CD8-positive, alpha-beta T cell (primary cell): ENCODE measurements at regions of chr10 and their contacts with region 1.

Region 1: GRCh38 chr10:79195091-79195923 is 126.5 kb downstream of the ZMIZ1 start:
- DNase-seq: peak; percentile 56 to 87 (median 76)
- ATAC-seq: peak; percentile 91
- H3K4me3 ChIP-seq: no peak overlapping the region
- H3K4me3 Mint-ChIP-seq: no peak overlapping the region
- H3K27ac ChIP-seq: no peak overlapping the region
- H3K27ac Mint-ChIP-seq: no peak overlapping the region
- H3K4me1 ChIP-seq: peaks cover 4% of the 10 kb centered on the region
- H3K4me1 Mint-ChIP-seq: no peaks in the 10 kb centered on the region
- H3K27me3 ChIP-seq: no peaks in the 10 kb centered on the region
- H3K27me3 Mint-ChIP-seq: no peaks in the 10 kb centered on the region
- CTCF ChIP-seq: peak; percentile 93

Region 2: DNA sequence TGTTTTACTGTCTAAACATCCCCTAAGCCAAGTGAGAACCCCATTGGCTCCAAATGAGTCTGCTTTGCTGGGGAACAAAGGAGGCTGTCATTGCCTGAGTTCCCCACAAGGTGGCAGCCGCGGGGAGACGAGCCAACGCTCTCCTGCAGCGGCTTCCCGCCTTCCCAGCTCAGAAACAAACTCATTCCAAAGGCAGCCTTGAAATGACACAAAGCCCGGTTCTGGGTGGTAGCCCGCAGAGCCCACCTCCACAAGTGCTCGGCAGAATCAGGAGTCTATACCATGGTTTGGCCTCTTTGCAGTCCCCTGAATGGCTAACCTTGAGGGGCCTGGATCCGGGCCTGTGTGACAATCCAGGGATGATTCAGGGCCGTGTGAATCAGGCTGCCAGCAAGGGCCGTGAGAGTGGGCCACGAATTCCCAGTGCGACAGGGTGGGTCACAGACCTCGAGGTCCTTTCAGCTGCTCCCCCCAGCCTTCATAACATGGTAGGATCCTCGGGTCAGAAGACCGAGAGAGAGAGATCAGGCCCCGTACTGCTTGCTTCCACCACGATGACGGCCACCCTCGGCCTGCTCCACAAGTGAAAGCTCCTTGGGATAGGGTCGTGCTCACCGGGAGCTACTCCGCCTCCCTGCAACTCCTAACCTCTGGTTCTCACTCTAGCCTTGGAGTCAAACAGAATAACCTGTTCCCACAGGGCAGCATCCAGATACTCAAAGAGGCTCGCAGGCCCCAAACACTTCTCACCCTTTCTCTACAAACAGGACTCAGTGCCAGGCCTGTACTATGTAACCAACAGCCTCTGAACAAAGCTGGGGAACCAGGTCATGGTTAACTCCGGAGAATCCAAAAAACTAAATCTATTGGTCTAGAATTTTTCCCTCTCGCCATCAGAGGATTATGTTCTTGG is 1348.3 kb before region 1 on chr10:
- CTCF ChIA-PET with region 1: interaction called, 3 read pairs
- POLR2A ChIA-PET with region 1: no interaction called
- intact Hi-C with region 1: loop called (anchors 2 to 5 kb)
- DNase-seq: peak; percentile 21 to 74 (median 62)
- ATAC-seq: peak; percentile 88
- H3K4me3 ChIP-seq: no peak overlapping the region
- H3K4me3 Mint-ChIP-seq: no peak overlapping the region
- H3K27ac ChIP-seq: no peak overlapping the region
- H3K27ac Mint-ChIP-seq: no peak overlapping the region
- H3K4me1 ChIP-seq: no peaks in the 10 kb centered on the region
- H3K4me1 Mint-ChIP-seq: peaks cover 6% of the 10 kb centered on the region
- H3K27me3 ChIP-seq: no peaks in the 10 kb centered on the region
- H3K27me3 Mint-ChIP-seq: no peaks in the 10 kb centered on the region
- CTCF ChIP-seq: peak; percentile 74

Region 3: DNA sequence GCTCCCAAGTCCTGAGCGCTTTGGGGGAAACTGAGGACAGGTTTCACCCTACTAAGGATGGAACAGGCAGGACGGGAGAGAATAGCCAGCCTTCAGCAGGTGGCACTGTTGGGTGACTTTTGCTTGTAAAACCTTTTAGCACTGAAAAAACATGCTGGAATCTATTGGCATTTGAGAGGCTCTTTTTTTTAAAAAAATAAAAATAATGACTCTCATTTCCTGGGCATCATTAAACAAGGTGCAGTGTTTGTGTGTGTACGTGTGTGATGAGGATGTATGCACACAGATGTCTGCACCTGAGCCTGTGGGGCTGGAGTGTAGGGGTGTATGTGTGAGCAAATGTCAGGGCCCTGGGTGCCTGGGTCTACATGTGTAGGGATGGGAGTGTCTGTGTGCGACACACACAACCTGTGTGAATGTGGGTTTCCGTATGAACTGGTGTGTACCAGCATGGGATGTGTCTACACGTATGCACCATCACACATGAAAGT is 983.7 kb before region 1 on chr10:
- CTCF ChIA-PET with region 1: interaction called, 5 read pairs
- POLR2A ChIA-PET with region 1: no interaction called
- intact Hi-C with region 1: loop called in 1 of 2 experiments (anchors 1 kb)
- DNase-seq: peak in 2 of 9 experiments; percentile 9 to 17
- ATAC-seq: no peak
- H3K4me3 ChIP-seq: no peak overlapping the region
- H3K4me3 Mint-ChIP-seq: no peak overlapping the region
- H3K27ac ChIP-seq: no peak overlapping the region
- H3K27ac Mint-ChIP-seq: no peak overlapping the region
- H3K4me1 ChIP-seq: no peaks in the 10 kb centered on the region
- H3K4me1 Mint-ChIP-seq: no peaks in the 10 kb centered on the region
- H3K27me3 ChIP-seq: no peaks in the 10 kb centered on the region
- H3K27me3 Mint-ChIP-seq: peaks cover 8% of the 10 kb centered on the region
- CTCF ChIP-seq: no peak

Region 4: GRCh38 chr10:78599081-78599853 is 596.0 kb before region 1 on chr10:
- CTCF ChIA-PET with region 1: interaction called, 9 read pairs
- POLR2A ChIA-PET with region 1: no interaction called
- intact Hi-C with region 1: loop called in 1 of 2 experiments (anchors 1 kb)
- DNase-seq: peak in 2 of 9 experiments; percentile 10 to 25
- ATAC-seq: no peak
- H3K4me3 ChIP-seq: no peak overlapping the region
- H3K4me3 Mint-ChIP-seq: no peak overlapping the region
- H3K27ac ChIP-seq: no peak overlapping the region
- H3K27ac Mint-ChIP-seq: no peak overlapping the region
- H3K4me1 ChIP-seq: no peaks in the 10 kb centered on the region
- H3K4me1 Mint-ChIP-seq: no peaks in the 10 kb centered on the region
- H3K27me3 ChIP-seq: no peaks in the 10 kb centered on the region
- H3K27me3 Mint-ChIP-seq: no peaks in the 10 kb centered on the region
- CTCF ChIP-seq: no peak

Region 5: GRCh38 chr10:78852466-78853240 is 342.7 kb before region 1 on chr10:
- CTCF ChIA-PET with region 1: interaction called, 17 read pairs
- POLR2A ChIA-PET with region 1: no interaction called
- intact Hi-C with region 1: loop called in 1 of 2 experiments (anchors 1 kb)
- DNase-seq: peak in 3 of 9 experiments; percentile 26 to 42 (median 32)
- ATAC-seq: no peak
- H3K4me3 ChIP-seq: no peak overlapping the region
- H3K4me3 Mint-ChIP-seq: no peak overlapping the region
- H3K27ac ChIP-seq: no peak overlapping the region
- H3K27ac Mint-ChIP-seq: no peak overlapping the region
- H3K4me1 ChIP-seq: no peaks in the 10 kb centered on the region
- H3K4me1 Mint-ChIP-seq: no peaks in the 10 kb centered on the region
- H3K27me3 ChIP-seq: no peaks in the 10 kb centered on the region
- H3K27me3 Mint-ChIP-seq: no peaks in the 10 kb centered on the region
- CTCF ChIP-seq: peak; percentile 19

Region 6: DNA sequence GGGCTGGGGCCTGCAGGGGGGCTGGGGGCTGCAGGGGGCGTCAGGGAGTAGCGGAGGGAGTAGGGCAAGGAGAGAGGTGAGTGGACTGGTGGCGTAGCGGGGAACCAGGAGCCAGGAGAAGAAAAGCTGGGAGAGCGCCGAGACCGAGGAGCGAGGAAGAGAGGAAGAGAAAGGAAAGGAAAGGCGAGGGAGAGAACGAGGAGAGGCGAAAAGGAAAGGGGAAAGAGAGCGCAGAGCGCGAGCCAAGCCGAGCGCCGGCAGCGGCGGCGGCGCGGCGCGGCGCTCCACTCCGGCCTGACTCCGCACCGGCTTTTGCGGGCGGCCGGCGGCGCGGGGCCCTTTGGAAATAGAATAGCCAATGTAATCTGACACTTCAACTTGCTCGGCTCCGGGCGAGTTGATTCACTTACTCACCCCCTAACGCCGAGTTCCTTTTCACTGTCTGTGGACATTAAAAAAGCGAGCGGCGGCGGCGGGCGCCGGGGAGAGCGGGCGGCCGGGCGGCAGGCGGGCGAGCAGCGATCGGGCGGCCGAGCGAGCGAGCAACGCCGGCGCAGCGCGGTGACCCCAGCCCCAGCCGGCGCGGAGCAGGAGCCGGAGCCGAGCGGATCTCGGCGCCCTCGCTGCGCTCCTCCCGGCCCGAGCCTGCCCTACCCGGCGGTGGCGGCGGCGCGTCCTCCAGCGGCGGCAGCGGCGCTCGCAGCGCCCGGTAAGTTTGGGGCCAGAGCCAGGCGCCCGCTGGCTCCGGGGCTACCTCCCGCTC is 126.6 kb before region 1 on chr10 and contains the start of gene ZMIZ1:
- CTCF ChIA-PET with region 1: interaction called, 7 read pairs
- POLR2A ChIA-PET with region 1: interaction called, 3 read pairs
- intact Hi-C with region 1: loop called in 1 of 2 experiments (anchors 5 kb)
- DNase-seq: peak; percentile 61 to 87 (median 80)
- ATAC-seq: peak; percentile 60
- H3K4me3 ChIP-seq: peak within 1 kb of the TSS; percentile 83 to 94
- H3K4me3 Mint-ChIP-seq: peak within 1 kb of the TSS; percentile 94
- H3K27ac ChIP-seq: peak within 1 kb of the TSS; percentile 36 to 44
- H3K27ac Mint-ChIP-seq: peak within 1 kb of the TSS; percentile 85
- H3K4me1 ChIP-seq: peaks cover 36% of the 10 kb centered on the region
- H3K4me1 Mint-ChIP-seq: peaks cover 48% of the 10 kb centered on the region
- H3K27me3 ChIP-seq: no peaks in the 10 kb centered on the region
- H3K27me3 Mint-ChIP-seq: no peaks in the 10 kb centered on the region
- CTCF ChIP-seq: no peak
- total RNA-seq, gene ZMIZ1: 10.1 to 10.8 TPM

Region 7: DNA sequence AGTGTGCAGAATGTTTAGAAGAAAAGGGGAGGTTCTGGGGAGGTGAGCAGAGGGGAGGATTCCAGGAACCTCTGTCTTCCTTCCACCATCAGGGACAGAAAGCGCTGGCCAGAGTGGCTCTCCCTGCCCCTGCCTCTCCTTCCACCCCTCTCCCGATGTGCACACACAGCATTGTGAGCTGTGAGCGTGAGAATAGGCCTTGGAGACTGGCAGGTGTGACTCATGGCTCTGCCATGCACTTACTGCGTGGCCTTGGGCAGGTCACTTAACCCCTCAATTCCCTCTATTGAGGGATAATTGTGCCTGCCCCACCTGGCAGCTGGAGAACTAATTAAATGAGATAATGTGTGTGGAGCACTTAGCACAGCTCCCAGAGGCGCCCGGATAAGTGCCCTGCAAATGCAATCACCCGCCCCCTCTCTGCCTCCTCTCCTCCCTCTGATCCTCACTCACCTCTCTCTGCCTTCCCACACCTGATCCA is 11.1 kb before region 1 on chr10:
- CTCF ChIA-PET with region 1: interaction called, 32 read pairs
- POLR2A ChIA-PET with region 1: no interaction called
- intact Hi-C with region 1: no loop called
- DNase-seq: no peak
- ATAC-seq: no peak
- H3K4me3 ChIP-seq: no peak overlapping the region
- H3K4me3 Mint-ChIP-seq: no peak overlapping the region
- H3K27ac ChIP-seq: no peak overlapping the region
- H3K27ac Mint-ChIP-seq: no peak overlapping the region
- H3K4me1 ChIP-seq: no peaks in the 10 kb centered on the region
- H3K4me1 Mint-ChIP-seq: no peaks in the 10 kb centered on the region
- H3K27me3 ChIP-seq: no peaks in the 10 kb centered on the region
- H3K27me3 Mint-ChIP-seq: no peaks in the 10 kb centered on the region
- CTCF ChIP-seq: no peak